Heart left ventricle (tissue), 16 donors: ENCODE measurements at regions of chr21 and their contacts with region 1.

Region 1: GRCh38 chr21:16162953-16163352 is 433.2 kb downstream of the USP25 start:
- DNase-seq: no peak
- ATAC-seq: no peak
- H3K4me3 ChIP-seq: no peak overlapping the region
- H3K27ac ChIP-seq: no peak overlapping the region
- H3K4me1 ChIP-seq: no peaks in the 10 kb centered on the region
- H3K27me3 ChIP-seq: no peaks in the 10 kb centered on the region
- CTCF ChIP-seq: no peak
- POLR2A ChIP-seq: no peak

Region 2: DNA sequence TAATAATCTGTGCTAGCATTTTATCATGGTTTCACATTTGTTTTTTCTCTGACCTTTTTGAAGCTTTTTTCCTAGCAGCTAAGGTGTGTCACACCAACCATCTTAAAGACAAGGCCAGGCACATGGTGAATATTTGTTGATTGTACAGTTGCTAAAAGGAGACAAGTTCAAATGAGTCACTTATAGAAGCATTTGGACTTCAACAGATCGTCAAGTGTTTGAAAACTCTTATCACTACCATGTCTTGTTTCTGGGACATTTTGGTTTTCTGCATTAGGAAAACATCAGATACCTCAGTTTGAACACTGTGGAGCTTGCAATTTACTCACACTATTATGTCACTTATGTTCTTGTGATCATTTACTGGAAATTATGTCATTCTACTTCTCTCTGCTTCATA is 25.8 kb before region 1 on chr21:
- intact Hi-C with region 1: loop called in 1 of 10 experiments (anchors 1 kb)
- DNase-seq: no peak
- ATAC-seq: no peak
- H3K4me3 ChIP-seq: no peak overlapping the region
- H3K27ac ChIP-seq: no peak overlapping the region
- H3K4me1 ChIP-seq: no peaks in the 10 kb centered on the region
- H3K27me3 ChIP-seq: no peaks in the 10 kb centered on the region
- CTCF ChIP-seq: no peak
- POLR2A ChIP-seq: no peak